HepG2 (cell line): ENCODE measurements at regions of chr17 and their contacts with region 1.

Region 1: GRCh38 chr17:43024407-43025289 is at the start of gene RND2:
- DNase-seq: peak; percentile 91
- ATAC-seq: peak; percentile 48
- H3K4me3 ChIP-seq: peak within 1 kb of the TSS; percentile 27 to 62 (median 45); a peak in 5 of 6 replicates
- H3K27ac ChIP-seq: no peak within 1 kb of the TSS
- H3K4me1 ChIP-seq: peaks cover 61% of the 10 kb centered on the region
- H3K27me3 ChIP-seq: no peaks in the 10 kb centered on the region; a peak in 1 of 5 replicates
- CTCF ChIP-seq: peak; percentile 96
- EP300 ChIP-seq: peak in 1 of 2 experiments; percentile 54; a peak in 2 of 4 replicates
- POLR2A ChIP-seq: no peak
- RAD21 ChIP-seq: peak; percentile 96
- total RNA-seq, gene RND2: 0.11 TPM in 2 replicates

Region 2: GRCh38 chr17:43068570-43069367 is 44.1 kb after region 1 on chr17:
- CTCF ChIA-PET with region 1: no interaction called
- POLR2A ChIA-PET with region 1: interaction called, 11 read pairs
- in situ Hi-C with region 1: no loop called
- intact Hi-C with region 1: loop called (anchors 2 kb)
- DNase-seq: peak; percentile 90
- ATAC-seq: peak; percentile 99
- H3K4me3 ChIP-seq: peak overlapping the region in 2 of 3 experiments; percentile 19 to 21; a peak in 2 of 6 replicates
- H3K27ac ChIP-seq: peak overlapping the region; percentile 79
- H3K4me1 ChIP-seq: peaks cover 22% of the 10 kb centered on the region
- H3K27me3 ChIP-seq: no peaks in the 10 kb centered on the region
- CTCF ChIP-seq: peak; percentile 36
- EP300 ChIP-seq: peak; percentile 86 to 97
- POLR2A ChIP-seq: 0 out of 4 replicates have a peak, but pooled peaks of 1 of the 2 experiments have one; percentile 16
- RAD21 ChIP-seq: 0 out of 2 replicates have a peak, but pooled peaks have one; percentile 24

Region 3: DNA sequence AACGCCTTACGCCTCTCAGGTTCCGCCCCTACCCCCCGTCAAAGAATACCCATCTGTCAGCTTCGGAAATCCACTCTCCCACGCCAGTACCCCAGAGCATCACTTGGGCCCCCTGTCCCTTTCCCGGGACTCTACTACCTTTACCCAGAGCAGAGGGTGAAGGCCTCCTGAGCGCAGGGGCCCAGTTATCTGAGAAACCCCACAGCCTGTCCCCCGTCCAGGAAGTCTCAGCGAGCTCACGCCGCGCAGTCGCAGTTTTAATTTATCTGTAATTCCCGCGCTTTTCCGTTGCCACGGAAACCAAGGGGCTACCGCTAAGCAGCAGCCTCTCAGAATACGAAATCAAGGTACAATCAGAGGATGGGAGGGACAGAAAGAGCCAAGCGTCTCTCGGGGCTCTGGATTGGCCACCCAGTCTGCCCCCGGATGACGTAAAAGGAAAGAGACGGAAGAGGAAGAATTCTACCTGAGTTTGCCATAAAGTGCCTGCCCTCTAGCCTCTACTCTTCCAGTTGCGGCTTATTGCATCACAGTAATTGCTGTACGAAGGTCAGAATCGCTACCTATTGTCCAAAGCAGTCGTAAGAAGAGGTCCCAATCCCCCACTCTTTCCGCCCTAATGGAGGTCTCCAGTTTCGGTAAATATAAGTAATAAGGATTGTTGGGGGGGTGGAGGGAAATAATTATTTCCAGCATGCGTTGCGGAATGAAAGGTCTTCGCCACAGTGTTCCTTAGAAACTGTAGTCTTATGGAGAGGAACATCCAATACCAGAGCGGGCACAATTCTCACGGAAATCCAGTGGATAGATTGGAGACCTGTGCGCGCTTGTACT is 100.7 kb after region 1 on chr17 and contains the start of gene BRCA1:
- CTCF ChIA-PET with region 1: no interaction called
- POLR2A ChIA-PET with region 1: interaction called, 16 read pairs
- in situ Hi-C with region 1: no loop called
- intact Hi-C with region 1: no loop called
- DNase-seq: peak; percentile 100
- ATAC-seq: peak; percentile 91
- H3K4me3 ChIP-seq: peak within 1 kb of the TSS; percentile 87 to 94 (median 91)
- H3K27ac ChIP-seq: peak within 1 kb of the TSS; percentile 95
- H3K4me1 ChIP-seq: peaks cover 53% of the 10 kb centered on the region
- H3K27me3 ChIP-seq: no peaks in the 10 kb centered on the region; a peak in 1 of 5 replicates
- CTCF ChIP-seq: peak; percentile 23; the same call in 1 of the 2 replicates
- EP300 ChIP-seq: peak; percentile 45 to 73; a peak in 2 of 4 replicates
- POLR2A ChIP-seq: peak; percentile 76 to 97
- RAD21 ChIP-seq: peak; percentile 55; the same call in 1 of the 2 replicates
- total RNA-seq, gene BRCA1: 37.5 and 56.0 TPM in 2 replicates

Region 4: DNA sequence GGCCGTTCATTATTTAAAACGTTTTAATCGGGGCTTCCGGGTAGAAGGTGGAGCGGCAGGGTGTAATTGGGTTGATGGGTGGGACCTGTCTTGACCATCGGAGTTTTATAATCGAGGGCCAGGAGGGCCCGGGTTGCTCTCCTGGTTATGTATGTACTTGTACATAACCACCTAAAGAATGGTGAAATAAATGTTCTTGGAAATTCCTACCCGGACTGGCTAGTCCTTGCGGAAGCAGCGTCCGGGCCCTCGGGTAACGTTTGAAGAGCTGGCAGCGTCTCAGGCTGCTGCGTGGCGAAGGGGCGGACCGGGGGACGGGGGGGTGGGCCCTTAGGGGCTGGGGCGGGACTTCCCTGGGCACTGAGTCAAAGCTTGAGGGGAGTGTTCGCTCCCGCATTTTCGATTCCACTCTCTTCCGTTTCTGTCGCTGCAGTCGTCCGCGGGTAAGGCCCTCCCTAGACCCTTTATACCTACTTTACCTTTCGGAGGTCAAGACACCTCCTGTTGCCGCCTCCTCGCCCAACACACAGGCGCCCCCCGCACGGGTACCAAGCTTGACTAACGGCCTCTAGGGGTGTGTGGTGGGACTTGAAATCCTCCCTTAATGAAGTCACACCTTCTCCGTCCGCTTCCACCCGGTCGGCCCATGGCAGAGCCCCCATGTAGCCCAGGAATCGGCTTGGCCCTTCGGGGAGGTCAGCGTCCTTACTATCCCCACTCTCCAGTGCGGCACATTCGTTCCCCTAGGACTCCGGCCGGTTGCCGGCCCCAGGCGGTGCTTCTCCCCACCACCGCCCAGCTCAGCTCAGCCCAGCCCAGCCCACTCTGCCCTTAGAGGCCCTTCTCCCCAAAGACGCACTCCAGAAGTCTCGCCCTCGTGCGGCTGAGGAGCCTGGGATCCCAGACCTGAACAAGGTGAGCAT is 187.1 kb after region 1 on chr17 and contains the start of gene TMEM106A:
- CTCF ChIA-PET with region 1: no interaction called
- POLR2A ChIA-PET with region 1: interaction called, 9 read pairs
- in situ Hi-C with region 1: no loop called
- intact Hi-C with region 1: loop called (anchors 5 kb)
- DNase-seq: peak; percentile 75
- ATAC-seq: peak; percentile 81
- H3K4me3 ChIP-seq: peak within 1 kb of the TSS; percentile 77 to 98 (median 77)
- H3K27ac ChIP-seq: peak within 1 kb of the TSS; percentile 80
- H3K4me1 ChIP-seq: peaks cover 62% of the 10 kb centered on the region
- H3K27me3 ChIP-seq: no peaks in the 10 kb centered on the region; a peak in 1 of 5 replicates
- CTCF ChIP-seq: peak; percentile 48
- EP300 ChIP-seq: no peak
- POLR2A ChIP-seq: peak; percentile 82 to 97
- RAD21 ChIP-seq: peak; percentile 43
- total RNA-seq, gene TMEM106A: 7.3 and 16.9 TPM in 2 replicates

Region 5: GRCh38 chr17:43330876-43331639 is 306.4 kb after region 1 on chr17:
- CTCF ChIA-PET with region 1: no interaction called
- POLR2A ChIA-PET with region 1: no interaction called
- in situ Hi-C with region 1: no loop called
- intact Hi-C with region 1: loop called (anchors 5 kb)
- DNase-seq: no peak
- ATAC-seq: no peak
- H3K4me3 ChIP-seq: no peak overlapping the region
- H3K27ac ChIP-seq: no peak overlapping the region
- H3K4me1 ChIP-seq: peaks cover 42% of the 10 kb centered on the region
- H3K27me3 ChIP-seq: no peaks in the 10 kb centered on the region
- CTCF ChIP-seq: peak; percentile 39
- EP300 ChIP-seq: no peak
- POLR2A ChIP-seq: no peak
- RAD21 ChIP-seq: no peak